Stomach (tissue), 19 donors: ENCODE measurements at regions of chr5 and their contacts with region 1.

Region 1: GRCh38 chr5:97854871-97855762 is 672.1 kb upstream of the RIOK2 start:
- DNase-seq: peak in 1 of 2 donors; percentile 34
- H3K4me3 ChIP-seq: no peak overlapping the region
- H3K27ac ChIP-seq: no peak overlapping the region
- H3K4me1 ChIP-seq: no peaks in the 10 kb centered on the region
- H3K27me3 ChIP-seq: no peaks in the 10 kb centered on the region
- CTCF ChIP-seq: no peak
- EP300 ChIP-seq: no peak
- POLR2A ChIP-seq: no peak

Region 2: DNA sequence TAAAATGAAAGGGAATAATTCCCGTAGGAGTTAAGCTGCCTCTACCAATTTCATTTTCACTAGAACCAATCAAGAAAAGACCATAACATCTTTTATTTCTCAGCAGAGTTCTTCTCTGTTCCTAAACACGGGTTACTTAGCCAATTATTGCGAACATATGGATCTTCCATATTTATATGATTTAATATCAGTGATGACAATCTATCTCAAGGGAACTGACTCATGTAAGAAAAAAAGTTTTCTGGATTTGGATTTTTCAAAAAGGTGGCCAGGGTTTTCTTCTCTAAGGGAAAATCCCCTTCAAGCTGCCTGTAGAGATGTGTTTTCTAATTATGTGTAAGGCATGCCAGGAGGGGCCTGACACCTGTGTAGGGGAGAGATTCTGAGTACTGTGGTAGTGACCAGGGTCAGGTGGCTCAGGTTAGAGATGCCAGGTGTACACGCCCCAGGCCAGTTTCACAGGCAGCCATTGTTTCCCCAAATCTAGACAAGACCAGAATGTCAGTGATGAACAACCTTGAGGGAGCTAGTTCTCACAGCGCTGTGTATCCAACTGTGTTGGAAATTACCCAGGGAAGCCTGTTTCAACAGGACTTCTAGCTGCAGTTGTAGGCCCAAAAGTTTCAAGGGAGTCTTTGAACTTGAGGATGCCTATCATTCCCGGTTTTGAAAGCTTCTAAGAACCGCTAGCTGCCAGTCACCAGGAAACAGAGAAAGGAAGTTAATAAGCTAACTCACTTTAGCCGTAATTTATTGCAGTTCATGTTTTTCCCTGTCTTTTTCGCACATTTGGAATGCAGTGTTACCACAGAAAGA is 345.8 kb after region 1 on chr5:
- intact Hi-C with region 1: loop called (anchors 5 kb)
- DNase-seq: no peak
- H3K4me3 ChIP-seq: no peak overlapping the region
- H3K27ac ChIP-seq: no peak overlapping the region
- H3K4me1 ChIP-seq: no peaks in the 10 kb centered on the region
- H3K27me3 ChIP-seq: no peaks in the 10 kb centered on the region
- CTCF ChIP-seq: no peak
- EP300 ChIP-seq: no peak
- POLR2A ChIP-seq: no peak